GM18951 (cell line): ENCODE measurements at regions of chr12 and their contacts with region 1.

Region 1: GRCh38 chr12:131621701-131622421 is 89.0 kb upstream of the SFSWAP start:
- POLR2A ChIP-seq: no peak

Region 2: DNA sequence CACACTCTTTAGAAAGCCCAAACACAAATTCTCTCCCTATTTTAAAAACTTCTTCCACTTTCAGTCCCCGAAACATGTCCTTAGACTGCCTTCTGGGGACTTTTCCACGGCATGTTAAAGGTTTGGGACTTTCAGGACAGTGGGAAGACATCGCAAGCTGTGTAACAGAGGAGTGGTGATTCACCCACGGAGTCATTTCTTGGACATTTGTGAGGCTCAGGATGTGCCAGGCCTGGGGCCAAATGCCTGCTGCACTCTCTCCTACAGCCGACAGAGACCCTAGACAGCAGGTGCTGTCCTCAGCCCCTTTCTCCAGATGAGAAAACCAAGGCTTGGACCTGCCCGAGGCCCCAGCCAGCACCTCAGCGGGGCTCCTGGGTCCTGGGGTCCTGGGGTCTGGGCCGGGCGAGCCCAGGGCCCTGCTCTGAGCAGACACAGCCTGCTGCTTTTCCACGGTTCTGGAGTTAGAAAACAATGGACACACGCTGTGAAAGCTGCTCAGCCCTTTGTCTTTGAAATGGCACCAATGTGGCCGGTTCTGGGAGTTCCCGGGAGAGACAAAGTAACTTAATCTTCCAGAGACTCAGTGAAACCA is 281.1 kb before region 1 on chr12:
- in situ Hi-C with region 1: loop called (anchors 5 kb)
- POLR2A ChIP-seq: no peak